ENCODE measurements at regions of chr4 and their contacts with region 1.

Region 1: GRCh38 chr4:38114386-38115150 is 154.4 kb downstream of the PTTG2 start:
- DNase-seq: no peak
- CTCF ChIP-seq: no peak

Region 2: GRCh38 chr4:38091636-38092035 is 22.9 kb before region 1 on chr4:
- CTCF ChIA-PET with region 1: interaction called, 15 read pairs
- POLR2A ChIA-PET with region 1: interaction called, 3 read pairs
- DNase-seq: no peak
- CTCF ChIP-seq: no peak

Region 3: GRCh38 chr4:38099908-38100407 is 14.6 kb before region 1 on chr4:
- CTCF ChIA-PET with region 1: interaction called, 43 read pairs
- POLR2A ChIA-PET with region 1: interaction called, 3 read pairs
- DNase-seq: no peak
- CTCF ChIP-seq: no peak